ENCODE measurements at regions of chr12 and their contacts with region 1.

Region 1: GRCh38 chr12:11836282-11837151 is 187.0 kb downstream of the ETV6 start:
- DNase-seq: peak; percentile 93
- ATAC-seq: peak; percentile 96
- H3K4me3 ChIP-seq: peak overlapping the region in 2 of 5 experiments; percentile 6 to 37
- H3K4me3 Mint-ChIP-seq: peak overlapping the region; percentile 64
- H3K27ac ChIP-seq: peak overlapping the region; percentile 74 to 77
- H3K27ac Mint-ChIP-seq: peak overlapping the region; percentile 92
- H3K4me1 ChIP-seq: peaks cover 37 to 53% of the 10 kb centered on the region in 2 donors
- H3K4me1 Mint-ChIP-seq: peaks cover 67% of the 10 kb centered on the region
- H3K27me3 ChIP-seq: no peaks in the 10 kb centered on the region
- H3K27me3 Mint-ChIP-seq: no peaks in the 10 kb centered on the region
- CTCF ChIP-seq: no peak

Region 2: GRCh38 chr12:11730299-11731041 is 106.0 kb before region 1 on chr12:
- CTCF ChIA-PET with region 1: no interaction called
- POLR2A ChIA-PET with region 1: interaction called, 4 read pairs
- intact Hi-C with region 1: loop called (anchors 1 kb)
- DNase-seq: peak; percentile 83
- ATAC-seq: peak; percentile 80
- H3K4me3 ChIP-seq: no peak overlapping the region
- H3K4me3 Mint-ChIP-seq: peak overlapping the region; percentile 79
- H3K27ac ChIP-seq: peak overlapping the region; percentile 69 to 76
- H3K27ac Mint-ChIP-seq: peak overlapping the region; percentile 94
- H3K4me1 ChIP-seq: peaks cover 82 to 94% of the 10 kb centered on the region in 2 donors
- H3K4me1 Mint-ChIP-seq: peaks cover 92% of the 10 kb centered on the region
- H3K27me3 ChIP-seq: no peaks in the 10 kb centered on the region
- H3K27me3 Mint-ChIP-seq: no peaks in the 10 kb centered on the region
- CTCF ChIP-seq: no peak

Region 3: DNA sequence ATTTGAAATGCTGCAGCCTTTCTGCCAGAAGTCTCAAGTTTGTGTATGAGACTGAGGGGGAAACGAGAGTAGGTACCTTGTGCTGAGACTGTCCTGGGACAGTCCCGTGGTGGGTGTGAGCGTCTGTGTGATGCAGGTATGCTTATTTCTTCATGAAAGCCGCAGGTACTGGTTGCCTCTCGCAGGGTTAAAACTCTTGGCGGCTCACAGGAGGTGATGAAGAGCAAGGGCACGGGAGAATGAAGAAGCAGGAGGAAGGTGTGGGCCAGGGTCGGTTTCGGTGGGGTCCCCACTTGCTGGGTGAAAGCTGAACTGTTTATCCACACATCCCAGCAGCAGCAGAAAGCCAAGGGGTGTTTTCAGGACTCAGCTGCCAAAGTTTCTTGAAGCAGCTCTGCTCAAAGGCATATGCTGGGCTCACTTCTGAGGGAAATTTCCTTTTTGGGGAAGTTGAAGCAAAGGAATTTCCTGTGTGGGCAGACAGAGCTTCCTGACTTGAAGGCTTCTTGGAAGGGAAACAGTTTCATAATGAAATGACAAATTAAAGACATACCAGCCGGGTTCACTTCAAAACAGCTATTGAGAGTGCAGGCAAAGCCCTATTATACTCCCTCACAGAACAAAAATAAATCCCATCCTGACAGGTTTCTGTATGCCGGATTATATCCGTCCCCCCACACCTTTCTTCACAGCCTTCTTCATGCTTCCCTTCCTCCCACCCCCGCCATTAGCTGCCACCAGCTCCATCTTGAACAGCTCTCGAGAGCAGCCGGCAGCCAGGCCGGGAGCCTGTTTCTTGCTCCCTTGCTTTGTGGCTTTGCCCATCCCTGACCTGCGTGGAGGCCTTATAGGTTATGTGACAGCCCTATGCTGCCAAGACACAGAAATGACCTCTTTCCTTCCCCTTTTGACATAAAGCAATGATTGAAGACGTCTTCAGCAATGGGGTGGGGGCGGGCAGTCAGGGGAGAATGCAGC is 70.4 kb before region 1 on chr12:
- CTCF ChIA-PET with region 1: no interaction called
- POLR2A ChIA-PET with region 1: no interaction called
- intact Hi-C with region 1: loop called (anchors 2 kb)
- DNase-seq: peak; percentile 86
- ATAC-seq: peak; percentile 78
- H3K4me3 ChIP-seq: peak overlapping the region in 3 of 5 experiments; percentile 1 to 21 (median 16)
- H3K4me3 Mint-ChIP-seq: peak overlapping the region; percentile 84
- H3K27ac ChIP-seq: peak overlapping the region; percentile 68 to 74
- H3K27ac Mint-ChIP-seq: peak overlapping the region; percentile 91
- H3K4me1 ChIP-seq: peaks cover 63 to 70% of the 10 kb centered on the region in 2 donors
- H3K4me1 Mint-ChIP-seq: peaks cover 83% of the 10 kb centered on the region
- H3K27me3 ChIP-seq: no peaks in the 10 kb centered on the region
- H3K27me3 Mint-ChIP-seq: no peaks in the 10 kb centered on the region
- CTCF ChIP-seq: no peak

Region 4: GRCh38 chr12:11855983-11856374 is 19.5 kb after region 1 on chr12:
- CTCF ChIA-PET with region 1: interaction called, 3 read pairs
- POLR2A ChIA-PET with region 1: no interaction called
- intact Hi-C with region 1: loop called (anchors 2 kb)
- DNase-seq: no peak
- ATAC-seq: peak; percentile 10
- H3K4me3 ChIP-seq: no peak overlapping the region
- H3K4me3 Mint-ChIP-seq: peak overlapping the region; percentile 58
- H3K27ac ChIP-seq: no peak overlapping the region
- H3K27ac Mint-ChIP-seq: peak overlapping the region; percentile 34
- H3K4me1 ChIP-seq: peaks cover 10 to 18% of the 10 kb centered on the region in 2 donors
- H3K4me1 Mint-ChIP-seq: peaks cover 27% of the 10 kb centered on the region
- H3K27me3 ChIP-seq: no peaks in the 10 kb centered on the region
- H3K27me3 Mint-ChIP-seq: no peaks in the 10 kb centered on the region
- CTCF ChIP-seq: no peak

Region 5: GRCh38 chr12:12562585-12563261 is 726.2 kb after region 1 on chr12 and contains the start of gene DUSP16:
- CTCF ChIA-PET with region 1: no interaction called
- POLR2A ChIA-PET with region 1: no interaction called
- intact Hi-C with region 1: loop called (anchors 5 kb)
- DNase-seq: peak; percentile 90
- ATAC-seq: peak; percentile 70
- H3K4me3 ChIP-seq: peak within 1 kb of the TSS; percentile 55 to 78 (median 72)
- H3K4me3 Mint-ChIP-seq: peak within 1 kb of the TSS; percentile 95
- H3K27ac ChIP-seq: peak within 1 kb of the TSS; percentile 38 to 82
- H3K27ac Mint-ChIP-seq: peak within 1 kb of the TSS; percentile 92
- H3K4me1 ChIP-seq: peaks cover 17 to 18% of the 10 kb centered on the region in 2 donors
- H3K4me1 Mint-ChIP-seq: peaks cover 20% of the 10 kb centered on the region
- H3K27me3 ChIP-seq: peaks cover 0 to 9% (median 3%) of the 10 kb centered on the region in 4 experiments
- H3K27me3 Mint-ChIP-seq: peaks cover 8% of the 10 kb centered on the region
- CTCF ChIP-seq: no peak
- total RNA-seq, gene DUSP16: 5.6 and 5.9 TPM in 2 replicates